ENCODE measurements at regions of chr13 and their contacts with region 1.

Region 1: DNA sequence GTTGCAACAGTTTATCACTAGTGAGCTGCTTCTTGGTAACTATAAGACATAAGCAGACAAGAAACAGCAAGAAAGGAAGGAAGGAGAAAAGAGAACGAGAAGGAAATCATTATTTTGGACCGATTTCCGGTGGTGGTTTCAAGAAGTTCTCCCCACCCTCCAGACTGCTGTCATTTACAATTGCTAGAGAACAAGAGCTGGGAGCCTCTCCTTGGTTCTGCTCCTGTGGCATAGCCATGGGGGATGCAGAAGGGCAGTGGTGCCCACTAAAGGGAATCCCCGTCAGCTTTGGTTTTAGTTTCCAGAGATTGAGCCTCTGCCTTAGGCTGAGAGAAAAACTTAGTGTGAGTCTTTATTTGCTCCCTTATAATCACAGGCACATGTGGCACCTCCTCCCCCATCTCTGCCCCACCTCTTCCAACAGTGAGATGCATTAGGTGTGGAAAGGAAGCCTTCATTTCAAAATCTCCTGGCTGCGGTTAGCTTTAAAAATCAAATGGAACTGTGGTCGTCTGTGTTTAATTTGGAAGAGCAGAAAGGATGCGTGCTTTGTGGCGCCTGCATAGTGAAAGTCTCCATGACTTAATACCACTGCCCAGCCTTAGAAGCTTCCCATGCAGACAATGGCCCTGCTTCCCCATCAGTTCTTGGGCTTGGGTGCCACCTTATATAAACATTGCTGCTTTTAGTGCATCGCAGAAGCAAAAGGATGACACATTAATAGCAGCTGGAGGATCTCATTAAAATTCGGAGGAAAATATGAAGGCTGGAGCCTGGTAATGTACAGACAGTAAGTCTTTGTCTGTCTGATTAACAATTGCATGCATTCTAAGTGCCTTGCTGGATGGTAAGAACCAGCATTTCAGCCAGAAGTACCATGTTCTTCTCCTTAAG is 25.0 kb downstream of the LRCH1 start:
- DNase-seq: no peak
- ATAC-seq: peak; percentile 32
- H3K4me3 ChIP-seq: no peak overlapping the region
- H3K4me3 Mint-ChIP-seq: peak overlapping the region in 7 of 10 donors; percentile 10 to 66 (median 46)
- H3K27ac ChIP-seq: no peak overlapping the region
- H3K27ac Mint-ChIP-seq: peak overlapping the region in 5 of 9 donors; percentile 1 to 81 (median 9)
- H3K4me1 ChIP-seq: peaks cover 3 to 11% of the 10 kb centered on the region in 2 donors
- H3K4me1 Mint-ChIP-seq: peaks cover 36 to 82% (median 67%) of the 10 kb centered on the region in 7 donors
- H3K27me3 ChIP-seq: no peaks in the 10 kb centered on the region
- H3K27me3 Mint-ChIP-seq: no peaks in the 10 kb centered on the region

Region 2: GRCh38 chr13:46593398-46593797 is 15.5 kb after region 1 on chr13:
- CTCF ChIA-PET with region 1: interaction called, 6 read pairs
- POLR2A ChIA-PET with region 1: interaction called, 3 read pairs
- intact Hi-C with region 1: loop called in 1 of 2 experiments (anchors 1 kb)
- DNase-seq: peak; percentile 14 to 85 (median 77)
- ATAC-seq: peak; percentile 95
- H3K4me3 ChIP-seq: no peak overlapping the region
- H3K4me3 Mint-ChIP-seq: peak overlapping the region; percentile 52 to 83 (median 66)
- H3K27ac ChIP-seq: peak overlapping the region; percentile 54
- H3K27ac Mint-ChIP-seq: peak overlapping the region in 8 of 9 donors; percentile 9 to 92 (median 83)
- H3K4me1 ChIP-seq: peaks cover 11 to 42% of the 10 kb centered on the region in 2 donors
- H3K4me1 Mint-ChIP-seq: peaks cover 45 to 80% (median 74%) of the 10 kb centered on the region in 7 donors
- H3K27me3 ChIP-seq: no peaks in the 10 kb centered on the region
- H3K27me3 Mint-ChIP-seq: no peaks in the 10 kb centered on the region